ENCODE measurements at regions of chr5 and their contacts with region 1.

Region 1: GRCh38 chr5:145681686-145682085 is 153.5 kb downstream of the PRELID2 start:
- DNase-seq: peak in 1 of 2 experiments; percentile 54
- H3K4me3 ChIP-seq: no peak overlapping the region
- H3K27ac ChIP-seq: no peak overlapping the region
- H3K4me1 ChIP-seq: no peaks in the 10 kb centered on the region
- H3K27me3 ChIP-seq: no peaks in the 10 kb centered on the region
- CTCF ChIP-seq: peak; percentile 33 to 87 (median 72)
- EP300 ChIP-seq: no peak
- POLR2A ChIP-seq: no peak
- RAD21 ChIP-seq: peak; percentile 61 to 71

Region 2: GRCh38 chr5:145521066-145521465 is 160.6 kb before region 1 on chr5:
- CTCF ChIA-PET with region 1: no interaction called
- POLR2A ChIA-PET with region 1: no interaction called
- DNase-seq: no peak
- H3K4me3 ChIP-seq: no peak overlapping the region
- H3K27ac ChIP-seq: no peak overlapping the region
- H3K4me1 ChIP-seq: peaks cover 0 to 3% (median 1%) of the 10 kb centered on the region in 4 experiments; a peak in 2 of 7 replicates
- H3K27me3 ChIP-seq: no peaks in the 10 kb centered on the region
- CTCF ChIP-seq: no peak
- EP300 ChIP-seq: no peak
- POLR2A ChIP-seq: no peak
- RAD21 ChIP-seq: no peak

Region 3: GRCh38 chr5:145587710-145588109 is 94.0 kb before region 1 on chr5:
- CTCF ChIA-PET with region 1: no interaction called
- POLR2A ChIA-PET with region 1: no interaction called
- DNase-seq: no peak
- H3K4me3 ChIP-seq: no peak overlapping the region
- H3K27ac ChIP-seq: no peak overlapping the region
- H3K4me1 ChIP-seq: no peaks in the 10 kb centered on the region
- H3K27me3 ChIP-seq: no peaks in the 10 kb centered on the region
- CTCF ChIP-seq: no peak
- EP300 ChIP-seq: no peak
- POLR2A ChIP-seq: no peak
- RAD21 ChIP-seq: no peak

Region 4: GRCh38 chr5:145668714-145669113 is 13.0 kb before region 1 on chr5:
- CTCF ChIA-PET with region 1: interaction called, 20 read pairs
- POLR2A ChIA-PET with region 1: no interaction called
- DNase-seq: no peak
- H3K4me3 ChIP-seq: no peak overlapping the region
- H3K27ac ChIP-seq: no peak overlapping the region
- H3K4me1 ChIP-seq: no peaks in the 10 kb centered on the region
- H3K27me3 ChIP-seq: no peaks in the 10 kb centered on the region
- CTCF ChIP-seq: no peak
- EP300 ChIP-seq: no peak
- POLR2A ChIP-seq: no peak
- RAD21 ChIP-seq: no peak

Measured in H1 (cell line).